Esophagus squamous epithelium (tissue), 5 donors: ENCODE measurements at regions of chr16 and their contacts with region 1.

Region 1: DNA sequence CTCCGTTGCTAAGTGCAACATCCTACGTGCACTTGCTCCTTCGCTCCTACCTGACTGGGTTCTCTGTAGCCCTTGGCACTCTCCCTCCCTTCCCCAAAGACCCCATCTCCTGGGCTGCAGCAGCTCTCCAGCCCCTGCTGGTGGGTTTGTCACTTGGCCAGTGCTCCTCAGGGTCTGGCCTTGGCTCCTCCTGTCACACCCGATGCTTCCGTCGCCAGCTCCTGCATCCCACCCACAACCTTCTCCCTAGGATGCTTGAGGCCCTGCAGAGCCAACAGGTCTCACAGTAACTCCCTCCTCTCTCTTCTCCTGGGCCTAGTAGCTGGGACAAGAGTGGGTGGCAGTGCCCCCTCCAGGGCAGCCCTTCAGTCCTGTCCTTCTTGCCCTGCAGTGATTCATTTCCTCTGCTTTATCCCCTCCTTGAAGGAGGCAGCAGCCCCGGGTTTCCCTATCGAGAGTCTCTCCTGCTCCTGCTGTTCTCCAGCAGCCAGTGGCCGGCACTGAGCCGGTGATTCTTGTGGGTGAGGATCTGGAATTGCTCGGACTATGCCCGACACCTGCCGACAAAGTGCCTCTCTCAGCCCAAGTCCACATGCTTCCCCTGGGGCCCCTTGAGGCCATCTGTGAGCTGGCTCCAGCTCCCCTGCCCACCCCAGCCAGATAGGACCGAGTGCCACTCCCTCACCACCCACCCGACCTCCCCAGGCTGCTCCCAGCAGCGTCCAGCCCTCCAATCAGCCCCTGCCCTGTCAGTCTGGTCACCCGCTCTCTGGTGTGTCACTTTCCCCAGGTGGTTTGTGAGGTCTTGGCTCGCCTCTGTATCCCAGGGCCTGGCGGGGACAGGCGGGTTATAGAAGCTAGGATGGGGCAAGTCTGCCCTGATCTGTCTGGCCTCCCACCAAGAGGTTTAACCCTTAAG is 3.8 kb downstream of the LITAFD start:
- DNase-seq: no peak
- H3K4me3 ChIP-seq: no peak overlapping the region
- H3K27ac ChIP-seq: no peak overlapping the region
- H3K4me1 ChIP-seq: peaks cover 13 to 53% (median 27%) of the 10 kb centered on the region in 3 donors
- H3K27me3 ChIP-seq: peaks cover 0 to 27% (median 0%) of the 10 kb centered on the region in 4 donors
- CTCF ChIP-seq: no peak
- POLR2A ChIP-seq: no peak

Region 2: GRCh38 chr16:8655184-8655717 is 230.7 kb before region 1 on chr16:
- intact Hi-C with region 1: loop called (anchors 5 kb)
- DNase-seq: no peak
- H3K4me3 ChIP-seq: no peak overlapping the region
- H3K27ac ChIP-seq: no peak overlapping the region
- H3K4me1 ChIP-seq: no peaks in the 10 kb centered on the region
- H3K27me3 ChIP-seq: no peaks in the 10 kb centered on the region
- CTCF ChIP-seq: peak in 3 of 6 experiments; percentile 32 to 67 (median 36)
- POLR2A ChIP-seq: no peak

Region 3: GRCh38 chr16:8989099-8989878 is 103.4 kb after region 1 on chr16:
- intact Hi-C with region 1: no loop called
- DNase-seq: no peak
- H3K4me3 ChIP-seq: no peak overlapping the region
- H3K27ac ChIP-seq: no peak overlapping the region
- H3K4me1 ChIP-seq: peaks cover 0 to 19% (median 0%) of the 10 kb centered on the region in 3 donors
- H3K27me3 ChIP-seq: no peaks in the 10 kb centered on the region
- CTCF ChIP-seq: no peak
- POLR2A ChIP-seq: no peak